ENCODE measurements at regions of chr5 and their contacts with region 1.

Region 1: DNA sequence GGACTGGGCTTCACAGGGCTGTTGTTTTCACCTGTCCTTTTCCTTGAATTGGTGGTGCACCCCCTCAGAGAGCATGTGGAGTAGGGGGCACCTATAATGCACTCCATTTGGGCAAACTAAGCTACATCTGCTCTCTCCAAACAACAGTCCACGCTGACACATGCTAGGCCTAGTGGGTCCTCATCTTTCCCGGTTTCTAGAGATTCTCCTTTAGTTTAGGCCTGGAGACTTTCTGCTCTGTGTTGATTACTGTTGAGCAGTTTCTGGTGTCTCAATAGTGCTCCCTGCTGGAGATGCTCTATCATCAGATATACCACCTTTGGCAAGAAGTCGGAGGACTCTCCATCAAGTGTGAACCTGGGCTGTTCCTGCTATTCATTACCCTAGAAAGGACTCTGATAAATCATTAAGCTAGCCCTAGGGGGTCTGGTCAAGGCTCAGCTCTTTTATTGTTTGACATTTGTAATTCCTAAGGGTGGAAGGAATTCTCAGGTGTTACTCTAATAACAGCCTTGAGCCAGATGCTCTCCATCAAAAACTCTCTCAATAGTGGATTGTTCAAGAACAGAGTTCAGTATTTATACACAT is 64.0 kb upstream of the FYB1 start:
- DNase-seq: peak; percentile 81
- H3K4me3 Mint-ChIP-seq: no peak overlapping the region
- H3K27ac Mint-ChIP-seq: no peak overlapping the region
- H3K4me1 Mint-ChIP-seq: peaks cover 6% of the 10 kb centered on the region
- H3K27me3 Mint-ChIP-seq: no peaks in the 10 kb centered on the region
- CTCF ChIP-seq: peak; percentile 54

Region 2: GRCh38 chr5:38905516-38905915 is 377.8 kb before region 1 on chr5:
- CTCF ChIA-PET with region 1: no interaction called
- POLR2A ChIA-PET with region 1: no interaction called
- intact Hi-C with region 1: no loop called
- DNase-seq: peak; percentile 16
- H3K4me3 Mint-ChIP-seq: no peak overlapping the region
- H3K27ac Mint-ChIP-seq: no peak overlapping the region
- H3K4me1 Mint-ChIP-seq: no peaks in the 10 kb centered on the region
- H3K27me3 Mint-ChIP-seq: no peaks in the 10 kb centered on the region
- CTCF ChIP-seq: no peak

Region 3: GRCh38 chr5:39005566-39006232 is 277.6 kb before region 1 on chr5:
- CTCF ChIA-PET with region 1: interaction called, 7 read pairs
- POLR2A ChIA-PET with region 1: no interaction called
- intact Hi-C with region 1: loop called (anchors 5 kb)
- DNase-seq: peak; percentile 37
- H3K4me3 Mint-ChIP-seq: no peak overlapping the region
- H3K27ac Mint-ChIP-seq: no peak overlapping the region
- H3K4me1 Mint-ChIP-seq: peaks cover 8% of the 10 kb centered on the region
- H3K27me3 Mint-ChIP-seq: no peaks in the 10 kb centered on the region
- CTCF ChIP-seq: peak; percentile 41

Region 4: GRCh38 chr5:39148983-39149534 is 134.3 kb before region 1 on chr5:
- CTCF ChIA-PET with region 1: interaction called, 15 read pairs
- POLR2A ChIA-PET with region 1: interaction called, 3 read pairs
- intact Hi-C with region 1: loop called (anchors 1 kb)
- DNase-seq: peak; percentile 29
- H3K4me3 Mint-ChIP-seq: no peak overlapping the region
- H3K27ac Mint-ChIP-seq: no peak overlapping the region
- H3K4me1 Mint-ChIP-seq: no peaks in the 10 kb centered on the region
- H3K27me3 Mint-ChIP-seq: no peaks in the 10 kb centered on the region
- CTCF ChIP-seq: peak; percentile 49

Region 5: DNA sequence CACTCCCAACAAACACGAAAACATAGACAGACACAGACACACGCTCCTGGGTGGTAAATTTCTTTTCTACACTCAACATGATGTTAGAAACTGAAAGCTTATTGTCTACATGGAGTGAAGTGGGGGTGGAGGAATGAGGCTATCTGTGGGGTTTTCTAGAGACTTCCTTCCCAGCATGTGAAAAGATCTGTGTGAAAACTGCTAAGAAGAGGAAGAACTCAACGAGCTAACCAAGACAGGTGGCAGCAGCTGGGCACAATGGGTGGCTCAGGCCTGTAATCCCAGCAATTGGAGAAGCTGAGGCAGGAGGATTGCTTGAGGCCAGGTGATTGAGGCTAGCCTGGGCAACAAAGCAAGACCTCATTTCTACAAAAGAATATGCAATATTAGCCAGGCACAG is 71.6 kb before region 1 on chr5:
- CTCF ChIA-PET with region 1: interaction called, 223 read pairs
- POLR2A ChIA-PET with region 1: interaction called, 9 read pairs
- intact Hi-C with region 1: no loop called
- DNase-seq: no peak
- H3K4me3 Mint-ChIP-seq: no peak overlapping the region
- H3K27ac Mint-ChIP-seq: no peak overlapping the region
- H3K4me1 Mint-ChIP-seq: no peaks in the 10 kb centered on the region
- H3K27me3 Mint-ChIP-seq: no peaks in the 10 kb centered on the region
- CTCF ChIP-seq: no peak

Region 6: GRCh38 chr5:39231705-39232525 is 51.4 kb before region 1 on chr5:
- CTCF ChIA-PET with region 1: interaction called, 12 read pairs
- POLR2A ChIA-PET with region 1: no interaction called
- intact Hi-C with region 1: no loop called
- DNase-seq: peak; percentile 41
- H3K4me3 Mint-ChIP-seq: no peak overlapping the region
- H3K27ac Mint-ChIP-seq: no peak overlapping the region
- H3K4me1 Mint-ChIP-seq: peaks cover 9% of the 10 kb centered on the region
- H3K27me3 Mint-ChIP-seq: no peaks in the 10 kb centered on the region
- CTCF ChIP-seq: no peak

Region 7: GRCh38 chr5:39264528-39264927 is 18.8 kb before region 1 on chr5:
- CTCF ChIA-PET with region 1: interaction called, 28 read pairs
- POLR2A ChIA-PET with region 1: no interaction called
- intact Hi-C with region 1: no loop called
- DNase-seq: no peak
- H3K4me3 Mint-ChIP-seq: no peak overlapping the region
- H3K27ac Mint-ChIP-seq: no peak overlapping the region
- H3K4me1 Mint-ChIP-seq: peaks cover 5% of the 10 kb centered on the region
- H3K27me3 Mint-ChIP-seq: no peaks in the 10 kb centered on the region
- CTCF ChIP-seq: no peak

Region 8: GRCh38 chr5:39352951-39353350 is 69.6 kb after region 1 on chr5:
- CTCF ChIA-PET with region 1: no interaction called
- POLR2A ChIA-PET with region 1: no interaction called
- intact Hi-C with region 1: no loop called
- DNase-seq: no peak
- H3K4me3 Mint-ChIP-seq: no peak overlapping the region
- H3K27ac Mint-ChIP-seq: no peak overlapping the region
- H3K4me1 Mint-ChIP-seq: no peaks in the 10 kb centered on the region
- H3K27me3 Mint-ChIP-seq: no peaks in the 10 kb centered on the region
- CTCF ChIP-seq: no peak

Region 9: GRCh38 chr5:39811381-39811780 is 528.1 kb after region 1 on chr5:
- CTCF ChIA-PET with region 1: no interaction called
- POLR2A ChIA-PET with region 1: no interaction called
- intact Hi-C with region 1: no loop called
- DNase-seq: no peak
- H3K4me3 Mint-ChIP-seq: no peak overlapping the region
- H3K27ac Mint-ChIP-seq: no peak overlapping the region
- H3K4me1 Mint-ChIP-seq: no peaks in the 10 kb centered on the region
- H3K27me3 Mint-ChIP-seq: no peaks in the 10 kb centered on the region
- CTCF ChIP-seq: no peak